Activated CD8-positive, alpha-beta T cell treated with anti-CD3 and anti-CD28 coated beads, Interleukin-2, amount 10 ng/mL, durations not matched to agents 7 days and 5 days (primary cell): ENCODE measurements at regions of chr12 and their contacts with region 1.

Region 1: DNA sequence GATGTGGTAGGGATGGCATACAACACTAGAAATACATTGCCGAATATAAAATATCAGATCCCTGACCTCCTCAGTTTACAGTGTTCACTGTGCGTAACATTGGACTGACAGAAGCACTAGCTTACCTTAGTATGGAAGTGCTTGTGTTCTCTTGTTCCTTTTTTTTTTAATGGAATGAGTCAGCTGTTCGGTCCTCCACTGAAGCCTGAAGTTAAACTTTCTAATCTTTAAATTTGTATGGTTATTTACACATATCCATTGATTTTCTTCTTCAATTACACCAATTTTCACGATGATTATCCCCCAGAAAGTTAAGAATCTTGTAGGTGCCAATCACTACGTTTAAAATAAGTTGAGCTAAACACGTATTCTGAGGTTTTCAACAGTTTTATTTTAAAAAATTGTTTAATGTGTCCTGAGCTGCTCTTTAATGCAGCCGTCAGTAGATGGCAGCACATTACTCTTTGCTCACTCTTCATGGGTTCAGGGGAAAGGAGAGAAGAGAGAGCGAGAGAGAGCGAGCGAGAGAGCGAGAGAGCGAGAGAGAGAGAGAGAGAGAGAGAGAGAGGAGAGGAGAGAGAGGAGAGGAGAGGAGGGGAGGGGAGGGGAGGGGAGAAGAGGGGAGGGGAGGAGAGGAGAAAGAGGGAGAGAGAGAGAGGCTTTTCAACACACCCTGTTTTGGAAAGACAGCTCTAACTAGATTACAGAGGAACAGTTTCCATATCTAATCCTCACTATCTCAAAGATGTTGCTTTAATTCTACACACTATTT is 134.7 kb upstream of the SCAF11 start:
- DNase-seq: peak; percentile 78
- ATAC-seq: peak; percentile 87
- H3K4me3 Mint-ChIP-seq: no peak overlapping the region
- H3K27ac Mint-ChIP-seq: no peak overlapping the region
- H3K4me1 Mint-ChIP-seq: peaks cover 7% of the 10 kb centered on the region
- H3K27me3 Mint-ChIP-seq: peaks cover 29% of the 10 kb centered on the region

Region 2: GRCh38 chr12:46043972-46044520 is 81.0 kb before region 1 on chr12:
- CTCF ChIA-PET with region 1: no interaction called
- POLR2A ChIA-PET with region 1: no interaction called
- DNase-seq: no peak
- ATAC-seq: no peak
- H3K4me3 Mint-ChIP-seq: no peak overlapping the region
- H3K27ac Mint-ChIP-seq: no peak overlapping the region
- H3K4me1 Mint-ChIP-seq: no peaks in the 10 kb centered on the region
- H3K27me3 Mint-ChIP-seq: peaks cover 6% of the 10 kb centered on the region

Region 3: GRCh38 chr12:46071769-46072624 is 53.0 kb before region 1 on chr12:
- CTCF ChIA-PET with region 1: interaction called, 15 read pairs
- POLR2A ChIA-PET with region 1: no interaction called
- DNase-seq: peak; percentile 65
- ATAC-seq: peak; percentile 84
- H3K4me3 Mint-ChIP-seq: no peak overlapping the region
- H3K27ac Mint-ChIP-seq: no peak overlapping the region
- H3K4me1 Mint-ChIP-seq: peaks cover 6% of the 10 kb centered on the region
- H3K27me3 Mint-ChIP-seq: peaks cover 5% of the 10 kb centered on the region

Region 4: GRCh38 chr12:46303039-46303666 is 178.1 kb after region 1 on chr12:
- CTCF ChIA-PET with region 1: interaction called, 52 read pairs
- POLR2A ChIA-PET with region 1: no interaction called
- DNase-seq: peak; percentile 56
- ATAC-seq: peak; percentile 57
- H3K4me3 Mint-ChIP-seq: no peak overlapping the region
- H3K27ac Mint-ChIP-seq: no peak overlapping the region
- H3K4me1 Mint-ChIP-seq: no peaks in the 10 kb centered on the region
- H3K27me3 Mint-ChIP-seq: peaks cover 5% of the 10 kb centered on the region

Region 5: GRCh38 chr12:46364777-46365580 is 239.9 kb after region 1 on chr12:
- CTCF ChIA-PET with region 1: interaction called, 10 read pairs
- POLR2A ChIA-PET with region 1: no interaction called
- DNase-seq: no peak
- ATAC-seq: no peak
- H3K4me3 Mint-ChIP-seq: no peak overlapping the region
- H3K27ac Mint-ChIP-seq: no peak overlapping the region
- H3K4me1 Mint-ChIP-seq: peaks cover 84% of the 10 kb centered on the region
- H3K27me3 Mint-ChIP-seq: no peaks in the 10 kb centered on the region

Region 6: GRCh38 chr12:46983393-46984266 is 858.6 kb after region 1 on chr12:
- CTCF ChIA-PET with region 1: interaction called, 22 read pairs
- POLR2A ChIA-PET with region 1: no interaction called
- DNase-seq: peak; percentile 51
- ATAC-seq: peak; percentile 69
- H3K4me3 Mint-ChIP-seq: no peak overlapping the region
- H3K27ac Mint-ChIP-seq: no peak overlapping the region
- H3K4me1 Mint-ChIP-seq: no peaks in the 10 kb centered on the region
- H3K27me3 Mint-ChIP-seq: peaks cover 9% of the 10 kb centered on the region